ENCODE measurements at regions of chr2 and their contacts with region 1.

Region 1: DNA sequence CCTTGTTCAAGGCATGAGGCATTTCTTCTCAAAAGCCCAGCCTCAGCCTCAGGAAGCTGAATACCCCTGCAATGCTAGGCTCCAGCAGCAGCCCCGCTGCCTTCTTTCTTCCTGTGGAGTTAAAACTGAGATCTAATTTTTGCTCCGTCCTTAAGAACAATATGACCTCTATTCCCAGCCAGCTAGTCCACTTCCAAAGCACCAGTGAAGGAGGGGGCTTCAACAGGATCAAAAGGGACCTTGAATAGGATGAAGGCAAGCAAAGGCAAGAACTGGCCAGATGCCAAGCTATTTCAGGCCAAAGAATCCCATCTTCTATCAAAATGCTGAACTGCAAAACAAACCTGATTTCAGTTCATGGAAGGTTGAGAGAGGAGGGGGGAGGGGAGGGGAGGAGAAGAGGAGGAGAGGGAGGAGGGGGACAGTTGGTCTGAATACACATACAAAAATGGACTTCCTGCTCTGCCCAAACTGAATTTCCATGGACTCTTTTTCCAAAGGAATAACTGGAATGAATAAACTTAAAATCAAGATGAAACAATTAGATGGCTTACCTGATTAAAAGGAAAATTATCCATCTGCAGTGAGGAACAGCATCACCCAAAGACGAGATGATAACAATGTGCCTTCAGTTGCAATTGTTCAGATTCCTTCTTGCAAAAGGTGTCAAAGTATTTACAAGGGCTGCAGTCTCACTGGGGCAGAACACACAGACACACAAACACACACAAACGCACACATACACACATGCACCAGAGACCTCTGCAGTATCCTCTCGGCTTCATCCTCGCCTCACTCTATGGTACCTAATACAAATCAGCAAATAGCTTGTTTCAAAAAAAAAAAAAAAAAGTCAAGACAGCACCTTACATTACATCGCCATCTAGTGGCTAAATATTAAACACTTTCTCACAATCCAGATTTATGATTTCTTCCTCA is at the start of gene SCN1A:
- DNase-seq: no peak
- total RNA-seq, gene SCN1A: 0.03 TPM

Region 2: GRCh38 chr2:166057370-166058164 is 69.9 kb before region 1 on chr2:
- intact Hi-C with region 1: loop called (anchors 5 kb)
- DNase-seq: no peak

Region 3: DNA sequence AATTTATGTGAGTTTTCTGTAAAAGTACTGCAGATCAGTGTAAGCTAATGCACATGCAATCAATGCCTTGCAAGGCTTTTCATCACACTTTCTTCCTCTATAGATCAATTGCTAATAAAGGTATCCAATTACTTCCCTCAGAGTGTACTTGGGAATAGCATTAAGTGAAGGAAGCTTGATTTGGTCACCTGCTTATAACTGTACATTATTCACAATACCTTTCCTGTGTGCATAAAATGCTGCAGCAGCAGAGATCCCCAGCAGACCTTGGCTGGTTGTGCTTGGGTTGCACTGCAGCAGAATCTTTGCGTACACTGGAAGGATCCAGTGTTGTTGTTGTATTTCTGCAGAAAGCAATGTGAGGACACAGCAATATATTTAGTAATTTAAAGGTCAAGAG is 266.8 kb after region 1 on chr2:
- intact Hi-C with region 1: no loop called
- DNase-seq: no peak

Measured in cardiac septum (tissue), 1 donor.